Activated T-helper 2 cell treated with anti-CD3 and anti-CD28 coated beads, Interferon-gamma antibody, Interleukin-2, Interleukin-4, amounts not matched to agents 10 μg/mL and 5 μg/mL and 100 μg/mL, durations not matched to agents 14 hours and 24 hours and 36 hours (primary cell): ENCODE measurements at regions of chr5 and their contacts with region 1.

Region 1: GRCh38 chr5:134041570-134042411 is 37.0 kb upstream of the VDAC1 start:
- DNase-seq: no peak
- H3K4me3 Mint-ChIP-seq: no peak overlapping the region
- H3K27ac Mint-ChIP-seq: no peak overlapping the region
- H3K4me1 Mint-ChIP-seq: no peaks in the 10 kb centered on the region
- H3K27me3 Mint-ChIP-seq: peaks cover 9% of the 10 kb centered on the region

Region 2: DNA sequence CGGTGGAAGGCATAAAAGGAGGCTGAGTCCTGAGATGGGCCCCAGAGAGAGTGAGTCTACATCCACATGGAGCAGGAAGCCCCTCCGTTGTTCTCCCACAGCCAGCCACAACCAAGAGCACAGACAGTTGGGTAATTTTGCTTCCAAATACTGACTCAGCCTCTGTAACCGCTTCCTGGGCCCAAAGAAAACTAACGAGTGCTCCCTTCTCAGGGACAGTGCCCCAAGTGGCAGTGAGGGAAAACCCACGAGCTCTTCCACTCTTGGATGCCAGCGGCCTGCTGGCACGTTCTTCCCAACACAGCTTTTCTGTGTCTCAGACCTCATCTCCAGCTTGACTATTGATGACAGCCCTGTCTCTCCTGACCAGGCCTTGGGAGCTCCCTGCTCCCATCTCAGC is 637.1 kb before region 1 on chr5:
- intact Hi-C with region 1: no loop called
- DNase-seq: no peak
- H3K4me3 Mint-ChIP-seq: no peak overlapping the region
- H3K27ac Mint-ChIP-seq: no peak overlapping the region
- H3K4me1 Mint-ChIP-seq: no peaks in the 10 kb centered on the region
- H3K27me3 Mint-ChIP-seq: peaks cover 2% of the 10 kb centered on the region

Region 3: GRCh38 chr5:134086943-134087305 is 45.1 kb after region 1 on chr5:
- intact Hi-C with region 1: loop called (anchors 1 kb)
- DNase-seq: peak; percentile 76
- H3K4me3 Mint-ChIP-seq: peak overlapping the region; percentile 31
- H3K27ac Mint-ChIP-seq: peak overlapping the region; percentile 76
- H3K4me1 Mint-ChIP-seq: peaks cover 46% of the 10 kb centered on the region
- H3K27me3 Mint-ChIP-seq: peaks cover 57% of the 10 kb centered on the region

Region 4: GRCh38 chr5:134113902-134114875 is 72.4 kb after region 1 on chr5 and contains the start of gene TCF7:
- intact Hi-C with region 1: loop called (anchors 2 kb)
- DNase-seq: peak; percentile 61
- H3K4me3 Mint-ChIP-seq: peak within 1 kb of the TSS; percentile 76
- H3K27ac Mint-ChIP-seq: peak within 1 kb of the TSS; percentile 28
- H3K4me1 Mint-ChIP-seq: peaks cover 48% of the 10 kb centered on the region
- H3K27me3 Mint-ChIP-seq: peaks cover 36% of the 10 kb centered on the region
- total RNA-seq, gene TCF7: 8.4 and 10.0 TPM in 2 replicates

Region 5: GRCh38 chr5:134145779-134146581 is 104.2 kb after region 1 on chr5:
- intact Hi-C with region 1: loop called (anchors 1 kb)
- DNase-seq: peak; percentile 68
- H3K4me3 Mint-ChIP-seq: no peak overlapping the region
- H3K27ac Mint-ChIP-seq: no peak overlapping the region
- H3K4me1 Mint-ChIP-seq: peaks cover 9% of the 10 kb centered on the region
- H3K27me3 Mint-ChIP-seq: no peaks in the 10 kb centered on the region

Region 6: GRCh38 chr5:134225618-134226440 is 184.0 kb after region 1 on chr5 and contains the start of gene PPP2CA:
- intact Hi-C with region 1: no loop called
- DNase-seq: peak; percentile 100
- H3K4me3 Mint-ChIP-seq: peak within 1 kb of the TSS; percentile 89
- H3K27ac Mint-ChIP-seq: peak within 1 kb of the TSS; percentile 98
- H3K4me1 Mint-ChIP-seq: peaks cover 38% of the 10 kb centered on the region
- H3K27me3 Mint-ChIP-seq: no peaks in the 10 kb centered on the region
- total RNA-seq, gene PPP2CA: 171 and 179 TPM in 2 replicates

Region 7: GRCh38 chr5:134245101-134245604 is 203.4 kb after region 1 on chr5:
- intact Hi-C with region 1: no loop called
- DNase-seq: no peak
- H3K4me3 Mint-ChIP-seq: no peak overlapping the region
- H3K27ac Mint-ChIP-seq: no peak overlapping the region
- H3K4me1 Mint-ChIP-seq: no peaks in the 10 kb centered on the region
- H3K27me3 Mint-ChIP-seq: peaks cover 5% of the 10 kb centered on the region